ENCODE measurements at regions of chr12 and their contacts with region 1.

Region 1: GRCh38 chr12:22334410-22335290 is at the start of gene ST8SIA1:
- DNase-seq: peak; percentile 44
- H3K4me3 ChIP-seq: peak within 1 kb of the TSS; percentile 70
- H3K27ac ChIP-seq: no peak within 1 kb of the TSS
- H3K4me1 ChIP-seq: no peaks in the 10 kb centered on the region
- H3K27me3 ChIP-seq: peaks cover 78% of the 10 kb centered on the region
- total RNA-seq, gene ST8SIA1: not detected in 2 replicates

Region 2: DNA sequence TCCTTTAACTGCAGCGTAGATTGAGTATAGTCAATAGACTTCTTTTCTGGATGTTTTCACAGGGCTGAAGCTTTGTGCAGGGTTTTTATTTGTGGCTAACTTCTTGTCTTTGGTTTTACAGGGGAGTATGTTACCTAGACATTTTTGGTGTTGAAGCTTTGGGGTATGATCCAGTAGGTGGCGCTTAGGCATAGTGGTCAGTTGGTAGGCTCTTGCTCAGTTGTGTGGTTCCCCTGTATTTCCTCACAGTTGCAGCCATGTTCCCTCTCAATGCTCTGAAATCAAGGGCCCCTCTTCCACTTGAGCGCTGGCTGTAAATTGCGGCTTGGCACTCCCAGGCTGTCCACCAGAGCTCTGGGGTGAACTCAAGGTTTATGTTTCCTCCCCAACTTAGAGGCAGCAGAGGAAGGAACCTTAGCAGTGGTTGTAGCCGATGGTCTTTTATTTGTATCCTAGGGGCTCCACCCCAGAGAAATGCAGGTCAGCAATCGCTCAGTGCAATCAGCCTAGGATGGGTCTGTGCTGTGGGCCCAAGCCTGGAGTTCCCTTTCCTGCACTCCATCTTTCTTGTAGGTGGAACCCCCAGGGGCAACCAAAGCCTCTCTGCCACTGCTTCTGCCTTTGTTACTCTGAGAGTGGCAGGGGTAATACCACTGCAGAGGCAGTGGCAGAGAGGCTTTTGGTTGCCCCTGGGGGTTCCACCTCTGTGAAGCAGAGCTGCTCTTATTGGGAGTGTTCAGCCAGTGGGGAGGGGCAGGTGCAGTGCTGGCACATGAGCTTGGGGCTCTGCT is 233.5 kb before region 1 on chr12:
- in situ Hi-C with region 1: loop called (anchors 10 kb)
- DNase-seq: peak; percentile 65
- H3K4me3 ChIP-seq: no peak overlapping the region
- H3K27ac ChIP-seq: no peak overlapping the region
- H3K4me1 ChIP-seq: 0 out of 2 replicates have a peak, but pooled peaks cover 11% of the 10 kb centered on the region
- H3K27me3 ChIP-seq: peaks cover 19% of the 10 kb centered on the region